Right ventricle myocardium superior (tissue), 1 donor: ENCODE measurements at regions of chr13 and their contacts with region 1.

Region 1: DNA sequence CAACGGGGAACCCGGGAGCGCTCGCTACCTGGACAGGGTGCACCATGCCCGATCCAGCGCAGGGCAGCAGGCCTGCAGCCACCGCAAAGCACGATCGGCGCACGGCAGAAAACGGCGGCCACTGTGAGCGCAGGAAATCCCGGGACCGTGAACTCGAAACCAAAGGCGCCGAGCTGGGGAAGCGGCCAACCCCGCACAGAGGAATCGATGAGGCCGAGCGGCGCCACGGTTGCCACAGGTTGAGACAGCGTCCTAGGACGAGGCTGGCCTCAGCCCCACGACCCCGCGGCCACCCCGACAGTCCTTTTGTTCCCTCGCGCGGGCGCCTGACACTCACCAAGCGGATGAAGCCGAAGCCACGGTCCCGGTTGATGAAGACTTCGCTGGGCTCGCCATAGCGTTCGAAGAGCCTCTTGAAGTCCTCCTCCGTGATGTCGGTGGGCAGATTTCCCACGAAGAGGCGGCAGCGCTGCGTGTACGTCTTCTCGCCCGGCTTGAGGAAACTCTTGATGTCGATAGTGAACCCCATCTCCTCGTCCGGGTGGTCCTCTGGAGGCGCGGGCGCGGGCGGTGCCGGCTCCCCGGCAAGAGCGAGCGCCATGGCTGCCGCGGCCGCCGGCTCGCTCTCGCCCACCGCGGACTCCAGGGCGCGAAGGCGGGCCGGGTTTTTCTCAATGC is 557 bp downstream of the PSPC1 start:
- DNase-seq: peak; percentile 76
- ATAC-seq: peak; percentile 78

Region 2: GRCh38 chr13:19633479-19634255 is 148.5 kb before region 1 on chr13 and contains the start of gene MPHOSPH8:
- intact Hi-C with region 1: loop called (anchors 10 kb)
- DNase-seq: peak; percentile 96
- ATAC-seq: peak; percentile 99
- total RNA-seq, gene MPHOSPH8: 26.0 TPM

Region 3: DNA sequence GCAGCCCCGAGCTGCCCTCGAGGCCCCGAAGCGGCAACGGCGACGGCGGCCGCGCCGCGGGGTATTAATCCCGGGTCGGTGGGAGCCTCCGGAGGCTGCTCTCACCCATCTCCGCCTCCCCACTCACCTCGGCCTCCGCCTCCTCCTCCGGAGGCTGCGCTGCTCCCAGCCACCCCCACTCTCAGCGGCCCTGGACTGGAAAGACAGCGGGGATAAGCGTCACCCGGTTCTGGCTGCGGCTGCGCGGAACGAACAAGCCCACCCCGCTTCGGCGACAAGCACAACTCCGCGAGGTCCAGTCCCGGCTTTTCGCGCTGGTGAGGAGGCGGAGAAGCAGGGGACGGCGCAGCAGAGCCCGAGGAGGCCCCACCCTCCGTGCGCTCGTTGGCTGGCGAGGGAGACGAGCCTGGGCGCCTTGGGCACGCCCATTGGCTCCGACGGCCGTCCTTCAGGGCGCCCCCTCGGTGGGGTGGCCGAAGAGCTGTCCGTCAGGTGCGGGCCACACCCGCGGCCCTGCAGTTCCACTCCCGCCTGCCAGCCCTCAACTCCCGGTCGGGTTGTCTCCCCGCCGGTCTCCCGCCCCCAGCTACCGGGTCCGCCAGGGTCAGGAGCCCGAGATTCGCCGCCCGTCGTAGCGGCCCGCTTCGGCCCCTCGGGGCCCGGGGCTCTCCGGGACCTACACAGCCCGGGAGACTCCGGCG is 81.3 kb after region 1 on chr13 and contains the start of gene ZMYM5:
- intact Hi-C with region 1: loop called (anchors 2 kb)
- DNase-seq: peak; percentile 99
- ATAC-seq: peak; percentile 96
- total RNA-seq, gene ZMYM5: 6.5 TPM

Region 4: DNA sequence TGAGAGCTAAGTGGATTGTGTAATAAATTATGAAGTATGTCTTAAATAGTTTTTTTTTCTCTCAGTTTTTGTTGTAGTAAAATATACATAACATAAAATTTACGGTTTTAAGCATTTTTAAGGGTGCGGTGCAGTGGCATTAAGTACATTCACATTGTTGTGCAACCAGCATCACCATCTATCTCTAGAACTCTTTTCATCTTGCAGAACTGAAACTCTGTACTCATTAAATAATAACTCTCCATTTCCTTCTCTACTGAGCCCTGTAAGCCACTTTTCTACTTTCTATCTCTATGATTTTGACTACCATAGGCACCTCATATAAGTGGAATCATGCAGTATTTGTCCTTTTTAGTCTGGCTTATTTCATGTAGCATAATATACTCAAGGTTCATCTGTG is 291.6 kb after region 1 on chr13:
- intact Hi-C with region 1: no loop called
- DNase-seq: no peak
- ATAC-seq: peak; percentile 56

Region 5: GRCh38 chr13:20127577-20128466 is 345.6 kb after region 1 on chr13:
- intact Hi-C with region 1: no loop called
- DNase-seq: peak; percentile 84
- ATAC-seq: peak; percentile 87